Activated CD4-positive, alpha-beta memory T cell treated with anti-CD3 and anti-CD28 coated beads for 36 hours (primary cell): ENCODE measurements at regions of chr10 and their contacts with region 1.

Region 1: GRCh38 chr10:62437696-62438095 is 63.5 kb downstream of the ZNF365 start:
- DNase-seq: no peak
- H3K4me3 Mint-ChIP-seq: no peak overlapping the region
- H3K27ac Mint-ChIP-seq: no peak overlapping the region
- H3K4me1 Mint-ChIP-seq: peaks cover 20% of the 10 kb centered on the region
- H3K27me3 Mint-ChIP-seq: peaks cover 3% of the 10 kb centered on the region

Region 2: GRCh38 chr10:62166331-62167131 is 271.2 kb before region 1 on chr10:
- CTCF ChIA-PET with region 1: no interaction called
- POLR2A ChIA-PET with region 1: no interaction called
- intact Hi-C with region 1: no loop called
- DNase-seq: no peak
- H3K4me3 Mint-ChIP-seq: no peak overlapping the region
- H3K27ac Mint-ChIP-seq: no peak overlapping the region
- H3K4me1 Mint-ChIP-seq: peaks cover 8% of the 10 kb centered on the region
- H3K27me3 Mint-ChIP-seq: no peaks in the 10 kb centered on the region

Region 3: GRCh38 chr10:62231371-62231770 is 206.3 kb before region 1 on chr10:
- CTCF ChIA-PET with region 1: no interaction called
- POLR2A ChIA-PET with region 1: no interaction called
- intact Hi-C with region 1: no loop called
- DNase-seq: no peak
- H3K4me3 Mint-ChIP-seq: no peak overlapping the region
- H3K27ac Mint-ChIP-seq: peak overlapping the region; percentile 65
- H3K4me1 Mint-ChIP-seq: peaks cover 18% of the 10 kb centered on the region
- H3K27me3 Mint-ChIP-seq: no peaks in the 10 kb centered on the region

Region 4: DNA sequence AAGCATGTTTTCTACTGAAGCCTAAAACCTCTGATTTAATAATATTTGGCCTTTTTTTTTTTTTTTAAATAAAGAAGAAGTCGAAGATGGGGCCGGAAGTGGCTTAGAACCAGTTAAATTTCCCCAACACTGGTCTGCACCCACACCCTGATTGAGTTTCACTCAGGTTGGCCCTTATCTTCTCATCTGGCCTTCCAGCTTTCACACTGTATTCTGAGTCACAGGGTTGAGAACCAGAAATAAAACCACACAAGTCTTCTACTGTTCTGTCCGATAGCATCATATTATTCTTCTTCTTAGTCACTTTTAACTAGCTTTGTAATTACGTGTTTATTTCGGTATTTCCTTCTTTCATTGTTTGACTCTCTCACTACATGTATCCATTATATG is 53.6 kb before region 1 on chr10:
- CTCF ChIA-PET with region 1: interaction called, 4 read pairs
- POLR2A ChIA-PET with region 1: interaction called, 7 read pairs
- intact Hi-C with region 1: loop called (anchors 1 kb)
- DNase-seq: peak; percentile 73
- H3K4me3 Mint-ChIP-seq: no peak overlapping the region
- H3K27ac Mint-ChIP-seq: peak overlapping the region; percentile 48
- H3K4me1 Mint-ChIP-seq: peaks cover 61% of the 10 kb centered on the region
- H3K27me3 Mint-ChIP-seq: no peaks in the 10 kb centered on the region

Region 5: DNA sequence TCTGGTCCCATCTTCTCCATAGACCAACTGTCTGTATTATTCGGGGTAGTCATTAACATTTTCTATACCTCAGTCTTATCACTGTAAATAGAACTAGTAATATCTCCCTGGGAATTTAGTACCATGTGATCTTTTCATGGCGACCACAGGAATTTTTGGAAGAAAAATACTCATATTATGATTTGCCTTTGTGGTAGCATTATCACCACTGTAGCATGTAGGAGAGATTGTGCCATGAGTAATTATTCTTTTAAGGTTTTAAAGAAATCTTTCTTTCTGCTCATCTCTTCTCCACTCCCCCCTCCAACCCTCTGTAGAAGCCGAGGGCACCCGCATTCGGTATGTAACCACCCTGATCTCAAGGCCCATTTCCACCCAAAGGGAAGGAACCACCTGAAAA is 38.5 kb before region 1 on chr10:
- CTCF ChIA-PET with region 1: no interaction called
- POLR2A ChIA-PET with region 1: no interaction called
- intact Hi-C with region 1: no loop called
- DNase-seq: no peak
- H3K4me3 Mint-ChIP-seq: no peak overlapping the region
- H3K27ac Mint-ChIP-seq: no peak overlapping the region
- H3K4me1 Mint-ChIP-seq: no peaks in the 10 kb centered on the region
- H3K27me3 Mint-ChIP-seq: no peaks in the 10 kb centered on the region

Region 6: DNA sequence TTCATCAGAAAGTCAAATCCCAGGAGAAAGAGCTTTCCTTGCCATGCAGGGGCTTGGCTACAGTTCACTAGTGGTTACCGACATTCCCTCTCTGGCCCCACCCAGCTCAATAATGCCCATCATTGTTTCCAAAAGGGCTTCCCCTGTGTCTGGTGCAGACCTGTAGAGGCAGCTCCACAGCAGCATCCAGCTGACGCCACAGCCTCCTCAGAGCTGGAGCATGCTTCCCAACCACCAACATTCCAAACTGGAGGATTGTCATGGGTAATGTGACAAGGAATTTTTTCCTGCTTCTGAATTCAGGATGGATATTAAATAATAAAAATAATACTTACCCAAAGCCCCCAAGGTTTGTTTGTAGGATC is 13.9 kb after region 1 on chr10:
- CTCF ChIA-PET with region 1: interaction called, 50 read pairs
- POLR2A ChIA-PET with region 1: no interaction called
- intact Hi-C with region 1: no loop called
- DNase-seq: no peak
- H3K4me3 Mint-ChIP-seq: no peak overlapping the region
- H3K27ac Mint-ChIP-seq: no peak overlapping the region
- H3K4me1 Mint-ChIP-seq: no peaks in the 10 kb centered on the region
- H3K27me3 Mint-ChIP-seq: peaks cover 3% of the 10 kb centered on the region

Region 7: GRCh38 chr10:62554632-62555199 is 117.0 kb after region 1 on chr10:
- CTCF ChIA-PET with region 1: interaction called, 11 read pairs
- POLR2A ChIA-PET with region 1: no interaction called
- intact Hi-C with region 1: no loop called
- DNase-seq: peak; percentile 15
- H3K4me3 Mint-ChIP-seq: no peak overlapping the region
- H3K27ac Mint-ChIP-seq: no peak overlapping the region
- H3K4me1 Mint-ChIP-seq: no peaks in the 10 kb centered on the region
- H3K27me3 Mint-ChIP-seq: peaks cover 2% of the 10 kb centered on the region

Region 8: DNA sequence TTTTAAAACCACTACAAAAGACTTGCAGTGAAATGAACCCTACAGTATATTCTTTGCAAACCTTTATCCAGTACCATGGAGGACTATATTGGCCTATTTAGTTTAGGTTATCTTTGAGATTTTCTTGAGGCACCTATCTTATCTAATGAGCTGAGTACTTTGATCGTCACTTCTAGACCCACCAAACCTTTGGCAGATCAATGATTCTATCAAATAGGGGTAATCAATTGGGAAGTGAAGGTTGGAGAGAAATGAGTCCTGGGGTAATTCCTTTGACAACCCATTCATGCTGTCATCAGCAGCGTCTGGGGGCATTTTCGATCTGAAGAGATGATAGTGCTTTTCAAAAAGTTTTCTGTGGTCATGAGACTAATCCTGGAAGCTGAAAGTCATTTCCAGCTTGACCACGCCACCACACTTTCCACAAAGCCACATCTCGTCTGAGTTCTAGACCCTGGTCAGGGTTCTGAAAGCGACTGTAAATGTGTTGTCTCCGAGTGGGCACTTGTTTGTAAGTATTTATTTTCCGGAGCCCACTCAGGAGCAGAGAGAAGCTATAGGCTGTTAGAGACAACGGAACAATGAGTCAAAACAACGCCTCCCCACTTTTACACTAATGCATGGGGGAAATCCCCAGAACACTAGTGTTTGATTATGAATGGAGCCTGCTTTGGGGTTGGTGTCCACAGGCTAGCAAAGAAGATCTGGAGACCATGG is 373.6 kb after region 1 on chr10:
- CTCF ChIA-PET with region 1: interaction called, 7 read pairs
- POLR2A ChIA-PET with region 1: interaction called, 4 read pairs
- intact Hi-C with region 1: loop called (anchors 2 kb)
- DNase-seq: peak; percentile 94
- H3K4me3 Mint-ChIP-seq: peak overlapping the region; percentile 88
- H3K27ac Mint-ChIP-seq: peak overlapping the region; percentile 88
- H3K4me1 Mint-ChIP-seq: peaks cover 79% of the 10 kb centered on the region
- H3K27me3 Mint-ChIP-seq: no peaks in the 10 kb centered on the region

Region 9: DNA sequence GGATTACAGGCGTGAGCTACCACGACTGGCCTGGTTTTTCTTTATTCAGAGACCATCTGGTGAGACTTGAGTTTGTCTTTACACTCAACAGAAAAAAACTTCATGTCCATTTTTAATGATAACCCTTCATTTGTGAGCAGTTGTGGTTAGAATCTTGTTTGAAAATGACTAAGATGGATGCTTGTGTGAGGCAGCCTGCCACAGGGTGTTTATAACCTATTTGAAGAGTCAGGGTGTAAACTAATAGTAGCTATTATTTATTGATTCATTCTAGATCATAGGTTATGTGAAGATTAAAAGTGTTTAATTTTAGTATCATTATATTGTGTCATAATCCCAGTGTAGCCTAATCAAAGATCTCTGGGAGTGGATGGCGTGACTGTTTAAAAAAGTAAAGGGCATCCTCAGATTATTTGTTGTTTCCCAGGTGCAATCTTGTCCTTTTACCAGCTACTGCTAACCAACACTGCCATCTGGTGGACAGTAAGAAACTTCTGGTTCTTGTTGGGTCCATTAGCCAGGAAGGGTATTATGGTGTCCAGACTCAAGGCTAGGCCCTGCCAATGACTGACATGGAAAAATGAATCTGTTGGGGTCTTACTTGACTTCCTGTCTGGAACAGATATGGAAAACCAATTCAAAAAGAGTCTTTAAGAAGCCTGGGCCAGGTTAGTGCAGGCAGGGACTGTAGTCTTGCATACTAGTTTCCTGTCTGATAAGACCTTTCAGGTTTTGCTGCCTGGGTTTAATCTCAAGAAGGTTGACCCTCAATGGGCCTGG is 720.3 kb after region 1 on chr10:
- CTCF ChIA-PET with region 1: interaction called, 18 read pairs
- POLR2A ChIA-PET with region 1: no interaction called
- intact Hi-C with region 1: loop called (anchors 2 kb)
- DNase-seq: peak; percentile 41
- H3K4me3 Mint-ChIP-seq: no peak overlapping the region
- H3K27ac Mint-ChIP-seq: no peak overlapping the region
- H3K4me1 Mint-ChIP-seq: peaks cover 7% of the 10 kb centered on the region
- H3K27me3 Mint-ChIP-seq: no peaks in the 10 kb centered on the region